ENCODE measurements at regions of chr2 and their contacts with region 1.

Region 1: DNA sequence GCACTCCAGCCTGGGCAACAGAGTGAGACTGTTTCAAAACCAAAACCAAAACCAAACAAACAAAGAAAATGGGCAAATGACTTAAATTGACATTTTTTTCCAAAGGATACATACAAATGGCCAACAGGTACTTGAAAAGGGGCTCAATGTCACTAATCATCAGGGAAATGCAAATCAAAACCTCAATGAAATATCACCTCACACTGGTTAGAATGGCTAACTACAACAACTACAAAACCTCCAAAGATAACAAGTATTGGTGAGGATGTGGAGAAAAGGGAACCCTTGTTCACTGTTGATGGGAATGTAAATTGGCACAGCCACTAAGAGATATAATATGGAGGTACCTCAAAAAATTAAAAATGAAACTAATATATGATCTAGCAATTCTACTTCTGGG is 213.2 kb upstream of the HS6ST1 start:
- DNase-seq: no peak

Region 2: DNA sequence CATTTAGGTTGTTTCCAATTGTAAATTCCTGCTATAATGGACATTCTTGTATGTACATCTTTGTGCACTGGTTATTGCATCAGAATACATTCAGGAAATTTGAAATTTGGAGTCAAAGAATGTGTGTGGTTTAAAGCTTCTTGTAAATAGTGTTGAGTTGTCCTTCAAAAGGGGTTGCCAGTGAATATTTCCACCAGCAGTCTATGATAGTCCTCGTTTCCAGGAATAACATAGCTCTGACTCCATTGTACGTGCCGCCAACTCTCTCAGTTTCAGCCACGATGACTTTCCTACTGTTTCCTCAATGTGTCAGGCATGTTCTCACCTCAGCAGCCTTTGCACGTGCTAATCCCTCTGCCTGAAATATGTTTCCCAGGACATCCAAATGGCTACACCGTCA is 202.2 kb before region 1 on chr2:
- intact Hi-C with region 1: loop called (anchors 2 kb)
- DNase-seq: no peak

Region 3: GRCh38 chr2:129673847-129674711 is 1142.2 kb after region 1 on chr2:
- intact Hi-C with region 1: no loop called
- DNase-seq: no peak